ENCODE measurements at regions of chr4 and their contacts with region 1.

Region 1: DNA sequence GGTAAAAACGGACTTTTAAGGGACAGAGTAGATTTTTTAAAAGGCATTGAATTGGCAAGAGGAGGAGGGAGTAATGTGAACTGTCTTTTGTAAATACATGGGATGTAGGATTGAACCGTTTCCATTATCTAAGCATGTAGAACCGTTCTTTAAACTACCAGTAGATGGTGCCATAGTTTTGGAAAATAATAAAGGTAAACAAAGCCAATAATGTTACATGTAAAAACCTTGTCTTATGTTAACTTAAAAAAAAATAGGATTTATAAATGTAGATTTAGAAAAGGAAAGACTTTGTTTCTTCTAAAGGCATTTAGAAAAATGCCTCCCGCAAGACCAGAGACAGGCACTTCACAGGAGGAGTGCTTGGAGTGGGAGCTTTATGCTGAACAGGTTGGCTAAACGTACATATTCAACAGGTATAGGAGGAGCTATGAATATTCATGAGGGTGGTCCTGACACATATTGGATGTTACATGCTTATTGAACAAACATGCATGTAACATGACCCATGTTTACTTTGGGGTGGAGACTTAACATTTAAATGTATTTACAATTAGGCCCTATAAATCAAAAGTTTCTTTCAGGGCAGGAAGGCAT is 45.5 kb upstream of the FAM241A start:
- DNase-seq: peak; percentile 51
- CTCF ChIP-seq: peak; percentile 64

Region 2: DNA sequence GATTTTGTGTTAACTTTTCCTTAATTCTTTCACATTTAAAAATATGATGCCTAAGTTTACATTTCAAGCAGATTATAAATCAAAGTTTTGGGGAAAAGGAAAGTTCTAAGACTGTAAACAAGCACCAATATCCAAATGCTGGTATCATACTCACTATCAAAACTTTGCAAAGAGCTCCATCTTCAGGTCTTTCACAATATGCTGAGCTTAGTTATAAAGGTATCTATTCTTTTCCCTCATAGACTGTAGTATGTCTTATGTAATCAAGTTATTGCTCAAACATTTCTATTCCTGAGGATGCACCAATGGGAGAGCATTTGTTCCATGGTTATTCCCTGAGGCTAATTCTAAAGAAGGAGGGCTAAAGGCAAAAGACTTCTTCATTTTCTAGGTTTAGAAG is 162.4 kb before region 1 on chr4:
- CTCF ChIA-PET with region 1: no interaction called
- POLR2A ChIA-PET with region 1: no interaction called
- DNase-seq: peak; percentile 14
- CTCF ChIP-seq: peak; percentile 54

Region 3: DNA sequence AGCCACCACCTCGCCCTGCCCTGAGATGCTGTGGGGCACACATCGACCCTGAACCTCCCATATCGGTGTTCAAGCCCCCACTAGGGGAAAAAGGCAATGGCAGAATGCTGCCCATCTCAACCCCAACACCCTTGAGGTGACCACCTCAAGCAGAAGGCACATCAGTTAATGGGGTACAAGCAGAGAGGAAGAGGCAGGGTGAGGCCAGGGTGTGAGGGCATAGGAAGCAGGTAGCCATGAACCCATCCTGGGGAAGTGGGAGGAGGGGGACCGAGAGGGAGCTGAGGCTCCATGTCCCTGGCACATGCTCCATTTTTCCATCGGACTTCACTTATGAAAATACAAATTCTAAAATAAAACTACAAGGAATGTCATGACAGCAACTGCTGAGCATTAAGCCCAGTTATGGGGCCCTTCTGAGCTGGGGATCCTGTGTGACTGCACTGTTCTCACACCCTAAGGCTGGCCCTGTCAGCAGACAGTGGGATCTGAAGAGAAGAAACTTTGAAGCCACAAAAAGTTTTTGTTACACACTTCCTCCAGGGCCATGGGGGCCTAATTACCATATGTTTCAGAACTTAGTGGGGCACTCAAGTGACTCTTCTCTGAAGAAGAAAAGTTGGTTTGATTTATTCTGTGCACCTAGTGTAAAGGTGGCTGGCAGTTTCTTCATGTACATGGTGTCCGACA is 22.7 kb before region 1 on chr4:
- CTCF ChIA-PET with region 1: interaction called, 11 read pairs
- POLR2A ChIA-PET with region 1: no interaction called
- DNase-seq: no peak
- CTCF ChIP-seq: no peak

Region 4: DNA sequence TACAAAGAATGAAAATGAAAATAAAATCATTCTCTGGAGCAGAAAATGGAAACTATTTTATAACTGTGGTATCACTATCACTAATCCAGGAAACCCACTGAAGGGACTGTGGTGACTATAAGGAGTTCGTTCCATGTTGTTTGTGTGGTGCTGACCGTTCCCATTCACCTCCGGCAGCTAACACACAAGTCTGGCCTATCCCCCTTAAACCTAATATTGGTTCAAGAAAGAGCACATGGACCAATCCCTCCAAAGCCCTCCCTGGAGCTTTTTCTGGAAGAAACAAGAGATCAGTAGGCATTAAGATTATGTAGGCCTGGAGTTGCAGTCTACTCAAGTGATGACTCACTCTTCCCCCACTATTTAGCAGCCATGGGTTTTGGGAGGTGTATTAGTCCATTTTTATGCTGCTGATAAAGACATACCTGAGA is 19.6 kb after region 1 on chr4:
- CTCF ChIA-PET with region 1: interaction called, 18 read pairs
- POLR2A ChIA-PET with region 1: no interaction called
- DNase-seq: peak; percentile 54
- CTCF ChIP-seq: no peak

Region 5: GRCh38 chr4:112231779-112232713 is 132.2 kb after region 1 on chr4 and contains the start of gene AP1AR:
- CTCF ChIA-PET with region 1: interaction called, 174 read pairs
- POLR2A ChIA-PET with region 1: no interaction called
- DNase-seq: peak; percentile 90
- CTCF ChIP-seq: peak; percentile 43

Region 6: DNA sequence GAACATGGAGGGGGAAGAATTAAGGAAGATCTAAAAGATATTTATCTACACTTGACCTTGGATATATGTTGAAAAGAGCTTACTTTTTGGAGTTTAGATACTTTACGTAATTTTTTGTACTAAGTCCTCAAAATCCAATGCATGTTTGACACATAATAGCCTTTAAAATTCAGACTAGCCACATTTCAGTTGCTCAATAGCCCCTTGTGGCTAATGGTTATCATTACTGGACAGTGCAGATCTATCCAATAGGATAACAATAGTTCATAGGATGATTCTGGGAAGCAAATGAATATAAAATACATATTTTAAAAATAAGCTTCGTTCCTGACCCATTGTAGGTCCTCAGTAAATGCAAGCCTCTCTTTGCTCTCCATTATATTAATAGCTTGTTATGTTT is 145.6 kb after region 1 on chr4:
- CTCF ChIA-PET with region 1: interaction called, 174 read pairs
- POLR2A ChIA-PET with region 1: no interaction called
- DNase-seq: no peak
- CTCF ChIP-seq: no peak

Region 7: DNA sequence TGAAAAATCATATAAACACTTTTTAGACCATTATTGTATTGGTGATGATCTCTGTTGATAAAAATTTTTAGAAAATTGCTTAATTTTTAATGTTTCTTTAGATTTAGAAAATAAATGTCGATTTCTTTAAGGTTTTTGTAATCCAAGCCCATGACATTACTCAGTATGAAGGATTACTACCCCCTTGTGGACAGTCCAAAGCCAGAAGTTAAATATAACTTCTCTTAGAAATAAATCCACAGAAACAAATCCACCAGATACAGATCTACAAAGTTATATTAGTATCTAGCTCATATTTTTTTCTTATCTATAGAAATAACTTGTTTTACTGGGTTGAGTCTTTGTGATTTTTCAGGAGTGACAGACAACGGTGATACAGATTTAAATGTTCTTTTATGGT is 167.0 kb after region 1 on chr4:
- CTCF ChIA-PET with region 1: interaction called, 15 read pairs
- POLR2A ChIA-PET with region 1: no interaction called
- DNase-seq: no peak
- CTCF ChIP-seq: peak; percentile 48